ENCODE measurements at regions of chr3 and their contacts with region 1.

Region 1: DNA sequence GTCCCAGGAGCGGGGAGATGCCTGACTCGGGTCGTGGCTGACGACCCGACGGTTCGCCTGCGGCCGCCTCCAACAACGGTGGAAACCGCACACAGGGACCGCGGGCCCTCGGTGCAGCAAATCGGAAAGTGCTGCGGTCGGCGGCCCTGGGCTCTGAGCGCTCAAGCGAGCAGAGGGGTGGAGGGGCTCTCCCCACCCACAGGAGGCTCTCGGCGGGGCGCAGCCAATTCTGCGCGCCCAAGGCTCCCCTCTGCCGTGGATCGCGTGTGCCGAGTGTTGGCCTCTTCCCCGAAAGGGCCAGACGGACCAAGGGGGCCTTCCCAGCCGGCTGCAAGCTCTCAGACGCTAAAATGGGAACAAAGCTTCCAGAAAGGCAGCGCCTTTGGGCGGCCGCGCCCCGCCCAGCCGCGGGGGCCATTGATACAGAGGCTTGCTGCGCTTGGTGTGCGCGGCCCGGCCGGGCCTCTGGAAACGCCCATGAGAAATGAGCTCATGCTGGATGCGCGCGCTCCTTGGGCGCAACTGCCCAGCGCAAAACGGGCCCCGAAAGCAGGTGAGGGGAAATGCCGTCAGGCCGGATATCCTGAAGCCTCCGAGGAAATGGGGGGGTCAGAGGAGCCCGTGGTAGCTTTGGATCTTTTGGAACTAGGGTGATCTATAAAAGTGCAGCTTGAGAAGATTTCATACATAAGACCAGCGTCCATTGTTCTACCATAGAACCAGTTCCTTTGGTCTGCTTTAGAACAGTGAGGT is 1.2 kb upstream of the GSK3B start:
- DNase-seq: peak; percentile 61 to 94 (median 78)
- ATAC-seq: peak; percentile 19
- H3K4me3 ChIP-seq: peak overlapping the region; percentile 97
- H3K4me3 Mint-ChIP-seq: no peak overlapping the region
- H3K27ac ChIP-seq: peak overlapping the region; percentile 100
- H3K27ac Mint-ChIP-seq: no peak overlapping the region
- H3K4me1 ChIP-seq: peaks cover 20% of the 10 kb centered on the region
- H3K4me1 Mint-ChIP-seq: peaks cover 26% of the 10 kb centered on the region
- H3K27me3 ChIP-seq: no peaks in the 10 kb centered on the region
- H3K27me3 Mint-ChIP-seq: no peaks in the 10 kb centered on the region
- CTCF ChIP-seq: no peak

Region 2: DNA sequence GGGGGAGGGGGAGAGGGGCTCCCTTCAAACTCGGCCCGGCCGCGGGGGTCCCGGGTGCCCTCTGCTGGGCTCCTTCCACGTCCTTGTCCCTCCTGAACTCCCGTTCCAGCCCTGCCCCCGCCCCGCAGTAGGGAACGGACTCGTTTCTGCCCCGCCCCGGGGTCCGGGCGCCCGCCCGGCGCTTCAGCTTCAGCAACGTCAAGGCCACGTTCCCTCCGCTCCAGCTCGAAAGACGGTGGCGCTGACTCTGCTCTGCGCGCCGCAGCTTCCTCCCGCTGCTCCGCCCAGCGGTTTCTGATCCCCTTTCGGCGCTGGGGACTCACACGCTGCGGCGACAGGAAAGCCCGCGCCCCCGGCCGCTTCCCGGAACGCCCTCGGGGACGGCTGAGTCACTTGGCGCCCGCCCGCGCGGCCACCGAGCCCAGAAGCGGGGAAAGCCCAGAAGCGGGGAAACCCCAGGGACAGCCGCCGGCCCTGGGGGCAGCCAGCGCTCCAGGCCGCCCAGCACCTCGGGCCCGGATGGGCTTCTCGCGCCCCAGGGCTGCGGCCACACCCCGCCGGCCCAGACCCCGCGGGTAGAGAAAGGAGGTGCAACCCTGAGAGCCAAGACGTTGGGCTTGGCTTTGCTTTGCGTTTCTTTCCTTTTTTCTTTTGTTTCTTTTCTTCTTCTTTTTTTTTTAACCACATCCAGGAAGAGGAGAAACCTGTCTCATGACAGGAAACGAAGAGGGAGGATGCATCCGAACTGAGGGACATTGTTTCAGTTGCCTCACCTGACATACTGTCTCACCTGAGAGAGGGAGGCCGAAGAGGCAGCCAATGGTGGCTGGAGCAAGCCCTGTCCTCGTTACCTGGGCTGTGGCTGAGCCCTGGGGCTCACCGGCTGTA is 772.3 kb before region 1 on chr3:
- CTCF ChIA-PET with region 1: no interaction called
- POLR2A ChIA-PET with region 1: interaction called, 4 read pairs
- intact Hi-C with region 1: loop called in 1 of 2 experiments (anchors 10 kb)
- DNase-seq: peak; percentile 70 to 97 (median 84)
- ATAC-seq: peak; percentile 86
- H3K4me3 ChIP-seq: peak overlapping the region; percentile 79
- H3K4me3 Mint-ChIP-seq: peak overlapping the region; percentile 89
- H3K27ac ChIP-seq: peak overlapping the region; percentile 81 to 90
- H3K27ac Mint-ChIP-seq: peak overlapping the region; percentile 96
- H3K4me1 ChIP-seq: peaks cover 23% of the 10 kb centered on the region
- H3K4me1 Mint-ChIP-seq: peaks cover 32% of the 10 kb centered on the region
- H3K27me3 ChIP-seq: no peaks in the 10 kb centered on the region
- H3K27me3 Mint-ChIP-seq: no peaks in the 10 kb centered on the region
- CTCF ChIP-seq: no peak

Region 3: DNA sequence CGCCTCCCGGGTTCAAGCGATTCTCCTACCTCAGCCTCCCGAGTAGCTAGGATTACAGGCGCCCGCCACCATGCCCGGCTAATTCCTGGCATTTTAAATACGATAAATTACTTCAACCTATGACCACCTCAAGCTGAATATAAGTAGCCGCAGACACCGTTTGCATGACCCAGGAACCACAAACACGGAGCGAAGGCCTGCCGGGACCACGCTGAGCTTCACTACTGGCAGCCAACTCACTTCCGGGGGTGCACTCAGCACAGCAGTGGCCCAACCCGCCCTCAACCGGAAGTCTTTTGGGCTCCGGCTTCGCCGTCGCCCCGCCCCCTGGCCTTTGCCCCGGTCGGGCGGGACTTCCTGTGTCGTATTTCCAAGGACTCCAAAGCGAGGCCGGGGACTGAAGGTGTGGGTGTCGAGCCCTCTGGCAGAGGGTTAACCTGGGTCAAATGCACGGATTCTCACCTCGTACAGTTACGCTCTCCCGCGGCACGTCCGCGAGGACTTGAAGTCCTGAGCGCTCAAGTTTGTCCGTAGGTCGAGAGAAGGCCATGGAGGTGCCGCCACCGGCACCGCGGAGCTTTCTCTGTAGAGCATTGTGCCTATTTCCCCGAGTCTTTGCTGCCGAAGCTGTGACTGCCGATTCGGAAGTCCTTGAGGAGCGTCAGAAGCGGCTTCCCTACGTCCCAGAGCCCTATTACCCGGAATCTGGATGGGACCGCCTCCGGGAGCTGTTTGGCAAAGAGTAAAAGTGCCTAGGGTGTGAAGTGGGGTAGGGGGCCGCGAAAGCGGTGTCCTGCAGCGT is 597.0 kb before region 1 on chr3 and contains the start of gene TIMMDC1:
- CTCF ChIA-PET with region 1: no interaction called
- POLR2A ChIA-PET with region 1: interaction called, 21 read pairs
- intact Hi-C with region 1: loop called in 1 of 2 experiments (anchors 5 kb)
- DNase-seq: peak; percentile 94 to 99 (median 96)
- ATAC-seq: peak; percentile 97
- H3K4me3 ChIP-seq: peak within 1 kb of the TSS; percentile 95
- H3K4me3 Mint-ChIP-seq: peak within 1 kb of the TSS; percentile 99
- H3K27ac ChIP-seq: peak within 1 kb of the TSS; percentile 90 to 93
- H3K27ac Mint-ChIP-seq: peak within 1 kb of the TSS; percentile 99
- H3K4me1 ChIP-seq: peaks cover 20% of the 10 kb centered on the region
- H3K4me1 Mint-ChIP-seq: peaks cover 42% of the 10 kb centered on the region
- H3K27me3 ChIP-seq: no peaks in the 10 kb centered on the region
- H3K27me3 Mint-ChIP-seq: no peaks in the 10 kb centered on the region
- CTCF ChIP-seq: no peak
- total RNA-seq, gene TIMMDC1: 14.4 to 18.3 TPM

Region 4: DNA sequence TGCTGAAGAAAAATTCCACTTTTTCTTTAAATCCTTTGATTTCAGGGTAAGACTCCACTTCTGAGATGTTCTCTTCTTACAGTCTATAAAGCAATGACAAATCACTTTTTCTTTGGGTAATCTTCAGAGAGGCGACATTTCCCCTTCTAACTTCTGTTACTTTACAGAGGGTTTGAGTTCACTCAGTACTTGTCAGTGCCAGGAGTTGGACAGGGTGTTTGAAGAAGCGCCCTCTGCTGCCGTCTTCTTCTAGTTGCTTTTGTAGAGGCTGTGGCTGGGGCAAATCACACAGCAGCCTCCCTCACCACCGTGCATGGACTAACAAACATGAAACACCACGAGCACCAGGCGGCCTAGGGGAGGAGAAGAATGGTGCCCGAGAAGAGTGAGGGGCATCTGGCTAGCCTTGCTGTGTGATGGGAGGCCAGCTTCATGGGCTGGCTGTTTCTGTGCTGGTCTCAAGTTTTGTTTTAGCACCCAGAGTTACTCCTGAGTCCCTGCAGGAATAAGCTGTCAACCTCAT is 535.9 kb before region 1 on chr3 and contains the start of gene CD80:
- CTCF ChIA-PET with region 1: no interaction called
- POLR2A ChIA-PET with region 1: no interaction called
- intact Hi-C with region 1: no loop called
- DNase-seq: peak; percentile 18 to 80 (median 36)
- ATAC-seq: peak; percentile 57
- H3K4me3 ChIP-seq: peak within 1 kb of the TSS; percentile 24
- H3K4me3 Mint-ChIP-seq: no peak within 1 kb of the TSS
- H3K27ac ChIP-seq: no peak within 1 kb of the TSS
- H3K27ac Mint-ChIP-seq: no peak within 1 kb of the TSS
- H3K4me1 ChIP-seq: peaks cover 22% of the 10 kb centered on the region
- H3K4me1 Mint-ChIP-seq: peaks cover 6% of the 10 kb centered on the region
- H3K27me3 ChIP-seq: no peaks in the 10 kb centered on the region
- H3K27me3 Mint-ChIP-seq: no peaks in the 10 kb centered on the region
- CTCF ChIP-seq: peak; percentile 27
- total RNA-seq, gene CD80: 0.17 to 0.41 TPM

Region 5: DNA sequence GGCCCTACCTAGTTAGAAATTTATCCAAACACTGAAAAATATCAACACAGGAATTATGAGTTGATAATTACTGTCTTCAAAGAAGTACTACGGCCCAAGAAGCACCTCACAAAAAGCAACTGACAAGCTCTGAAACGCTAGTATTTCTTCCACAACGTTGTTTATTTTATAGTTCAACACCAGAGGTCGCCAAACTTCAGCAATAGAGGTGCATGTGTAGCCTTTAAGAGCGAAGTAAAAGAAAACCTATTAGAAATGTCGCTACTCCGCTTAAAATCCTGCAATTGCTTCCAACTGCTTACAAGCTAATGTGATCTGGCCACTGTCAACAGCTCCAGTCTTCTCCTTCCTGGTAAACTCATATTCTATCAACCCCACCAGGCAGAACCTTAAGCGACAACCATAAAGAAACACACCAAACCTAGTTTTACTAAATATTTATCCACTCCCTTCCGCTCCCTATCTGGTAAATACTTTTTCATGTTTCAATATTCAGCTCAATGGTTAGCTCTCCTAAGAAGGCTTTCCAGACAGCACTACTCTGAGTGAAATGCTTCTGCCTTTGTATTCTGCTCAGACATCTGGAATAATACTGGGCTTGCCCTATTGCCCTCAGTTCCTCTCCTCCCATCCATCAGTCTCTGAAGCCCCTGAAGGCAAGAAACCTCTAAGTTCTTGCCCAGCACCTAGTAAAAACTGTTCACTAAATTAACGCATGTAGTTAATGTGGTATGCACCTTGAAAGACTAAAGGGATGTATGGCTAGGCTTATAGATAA is 203.3 kb before region 1 on chr3:
- CTCF ChIA-PET with region 1: interaction called, 4 read pairs
- POLR2A ChIA-PET with region 1: interaction called, 24 read pairs
- intact Hi-C with region 1: loop called in 1 of 2 experiments (anchors 2 kb)
- DNase-seq: peak in 13 of 14 experiments; percentile 2 to 79 (median 20)
- ATAC-seq: peak; percentile 81
- H3K4me3 ChIP-seq: no peak overlapping the region
- H3K4me3 Mint-ChIP-seq: no peak overlapping the region
- H3K27ac ChIP-seq: no peak overlapping the region
- H3K27ac Mint-ChIP-seq: peak overlapping the region; percentile 53
- H3K4me1 ChIP-seq: no peaks in the 10 kb centered on the region
- H3K4me1 Mint-ChIP-seq: peaks cover 20% of the 10 kb centered on the region
- H3K27me3 ChIP-seq: no peaks in the 10 kb centered on the region
- H3K27me3 Mint-ChIP-seq: no peaks in the 10 kb centered on the region
- CTCF ChIP-seq: peak; percentile 84

Region 6: GRCh38 chr3:120081719-120082118 is 13.7 kb before region 1 on chr3:
- CTCF ChIA-PET with region 1: no interaction called
- POLR2A ChIA-PET with region 1: interaction called, 32 read pairs
- intact Hi-C with region 1: no loop called
- DNase-seq: no peak
- ATAC-seq: no peak
- H3K4me3 ChIP-seq: no peak overlapping the region
- H3K4me3 Mint-ChIP-seq: no peak overlapping the region
- H3K27ac ChIP-seq: no peak overlapping the region
- H3K27ac Mint-ChIP-seq: peak overlapping the region; percentile 21
- H3K4me1 ChIP-seq: peaks cover 25% of the 10 kb centered on the region
- H3K4me1 Mint-ChIP-seq: peaks cover 80% of the 10 kb centered on the region
- H3K27me3 ChIP-seq: no peaks in the 10 kb centered on the region
- H3K27me3 Mint-ChIP-seq: no peaks in the 10 kb centered on the region
- CTCF ChIP-seq: no peak

Region 7: GRCh38 chr3:120596116-120596852 is 500.9 kb after region 1 on chr3 and contains the start of gene NDUFB4:
- CTCF ChIA-PET with region 1: no interaction called
- POLR2A ChIA-PET with region 1: interaction called, 11 read pairs
- intact Hi-C with region 1: loop called (anchors 5 to 10 kb)
- DNase-seq: peak; percentile 87 to 99 (median 94)
- ATAC-seq: peak; percentile 87
- H3K4me3 ChIP-seq: peak within 1 kb of the TSS; percentile 88
- H3K4me3 Mint-ChIP-seq: peak within 1 kb of the TSS; percentile 98
- H3K27ac ChIP-seq: peak within 1 kb of the TSS; percentile 94 to 95
- H3K27ac Mint-ChIP-seq: no peak within 1 kb of the TSS
- H3K4me1 ChIP-seq: peaks cover 14% of the 10 kb centered on the region
- H3K4me1 Mint-ChIP-seq: peaks cover 8% of the 10 kb centered on the region
- H3K27me3 ChIP-seq: no peaks in the 10 kb centered on the region
- H3K27me3 Mint-ChIP-seq: no peaks in the 10 kb centered on the region
- CTCF ChIP-seq: no peak
- total RNA-seq, gene NDUFB4: 81.3 to 84.0 TPM

Region 8: DNA sequence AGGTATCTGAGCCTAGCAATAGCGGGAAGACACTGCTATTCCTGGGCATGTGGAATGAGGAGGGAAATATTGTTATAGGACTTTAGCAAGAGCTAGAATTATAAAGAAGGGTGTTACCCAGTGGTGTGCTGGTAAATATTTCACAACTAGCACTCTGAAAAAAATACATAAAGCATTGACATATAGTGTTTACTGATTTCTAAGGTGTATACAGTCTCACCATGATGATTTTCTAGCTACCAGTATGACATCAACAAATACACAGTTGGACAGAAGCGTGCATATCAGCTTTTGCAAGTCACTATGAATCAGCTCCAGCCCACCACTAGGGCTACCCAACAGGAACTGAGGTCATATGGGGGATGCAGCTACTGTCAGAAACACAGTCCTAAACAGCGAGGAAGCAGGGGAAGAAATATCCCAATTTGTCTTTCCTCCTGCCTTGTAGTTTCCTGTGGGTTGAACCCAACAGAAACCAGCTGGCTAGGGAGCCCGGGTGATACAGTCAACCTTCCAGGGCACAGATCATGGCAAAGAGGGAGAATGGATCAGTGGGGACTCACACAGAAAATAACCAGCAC is 547.1 kb after region 1 on chr3:
- CTCF ChIA-PET with region 1: no interaction called
- POLR2A ChIA-PET with region 1: no interaction called
- intact Hi-C with region 1: no loop called
- DNase-seq: peak in 2 of 14 experiments; percentile 7 to 8
- ATAC-seq: no peak
- H3K4me3 ChIP-seq: no peak overlapping the region
- H3K4me3 Mint-ChIP-seq: no peak overlapping the region
- H3K27ac ChIP-seq: no peak overlapping the region
- H3K27ac Mint-ChIP-seq: no peak overlapping the region
- H3K4me1 ChIP-seq: peaks cover 2% of the 10 kb centered on the region
- H3K4me1 Mint-ChIP-seq: peaks cover 16% of the 10 kb centered on the region
- H3K27me3 ChIP-seq: no peaks in the 10 kb centered on the region
- H3K27me3 Mint-ChIP-seq: peaks cover 4% of the 10 kb centered on the region
- CTCF ChIP-seq: no peak

Measured in CD4-positive, alpha-beta T cell (primary cell).